ENCODE measurements at regions of chr9 and their contacts with region 1.

Region 1: DNA sequence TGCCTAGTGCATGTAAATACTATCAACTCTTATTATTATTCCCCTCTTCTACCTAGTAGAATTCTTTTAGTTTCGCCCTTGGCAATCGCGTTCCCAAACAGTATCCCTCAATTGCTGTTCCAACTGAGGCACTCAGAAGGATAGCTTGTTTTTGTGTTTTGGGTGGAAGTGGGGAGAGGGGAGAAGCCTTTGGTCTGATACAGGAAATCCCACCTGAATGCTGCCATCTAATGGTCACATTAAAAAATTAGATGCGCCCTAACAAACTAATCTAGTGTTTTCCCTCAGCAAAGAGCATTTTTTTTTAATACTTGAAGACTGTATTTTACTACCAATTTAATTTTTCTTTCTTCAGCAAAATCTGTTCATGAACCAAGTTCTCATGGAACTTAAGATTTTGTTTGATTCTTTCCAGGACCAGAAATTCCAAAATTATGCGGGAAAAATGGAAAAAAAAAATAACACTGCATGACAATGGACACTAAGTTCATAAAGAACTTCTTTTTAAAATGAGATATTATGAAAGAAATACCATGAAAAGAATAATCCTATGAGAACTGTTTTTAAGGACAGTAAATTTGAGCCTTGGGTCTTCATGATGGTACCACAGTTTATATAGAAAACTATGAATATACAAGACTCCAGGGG is 22.2 kb upstream of the GLDC start:
- DNase-seq: no peak
- H3K4me3 ChIP-seq: no peak overlapping the region
- CTCF ChIP-seq: peak; percentile 24

Region 2: DNA sequence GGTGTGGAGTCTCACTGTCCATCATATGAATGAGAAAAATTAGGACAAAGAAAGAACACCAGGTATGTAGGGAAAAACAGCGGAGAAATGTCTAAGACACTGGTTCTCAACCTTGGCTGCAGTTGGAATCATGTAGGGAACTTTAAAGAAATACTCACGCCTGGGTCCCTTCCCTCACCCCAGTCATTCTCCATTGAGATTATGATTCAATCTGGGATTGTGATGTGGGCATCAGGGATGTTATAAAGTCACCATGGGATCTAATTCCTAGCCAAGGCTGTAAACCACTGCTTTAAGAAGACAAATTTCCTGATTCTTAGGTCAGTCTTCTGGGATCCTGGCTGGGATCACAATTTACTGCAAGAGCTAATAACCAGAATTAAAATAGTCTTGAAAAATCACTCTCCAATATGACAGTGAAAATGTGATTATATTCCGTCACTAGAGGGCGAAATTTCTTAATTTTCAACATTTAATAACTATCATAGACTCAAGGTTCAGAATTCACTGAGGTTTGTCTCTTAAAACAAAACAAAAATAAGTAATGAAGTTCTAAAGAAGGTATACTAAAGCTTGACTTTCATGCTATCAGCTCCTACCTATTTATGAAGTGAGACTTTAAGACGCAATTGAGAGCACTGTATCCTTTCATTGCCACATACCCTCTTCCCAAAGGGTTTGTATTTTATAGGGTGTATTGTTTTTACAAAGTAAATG is 82.7 kb before region 1 on chr9:
- CTCF ChIA-PET with region 1: interaction called, 17 read pairs
- POLR2A ChIA-PET with region 1: no interaction called
- DNase-seq: no peak
- H3K4me3 ChIP-seq: no peak overlapping the region
- CTCF ChIP-seq: no peak

Region 3: DNA sequence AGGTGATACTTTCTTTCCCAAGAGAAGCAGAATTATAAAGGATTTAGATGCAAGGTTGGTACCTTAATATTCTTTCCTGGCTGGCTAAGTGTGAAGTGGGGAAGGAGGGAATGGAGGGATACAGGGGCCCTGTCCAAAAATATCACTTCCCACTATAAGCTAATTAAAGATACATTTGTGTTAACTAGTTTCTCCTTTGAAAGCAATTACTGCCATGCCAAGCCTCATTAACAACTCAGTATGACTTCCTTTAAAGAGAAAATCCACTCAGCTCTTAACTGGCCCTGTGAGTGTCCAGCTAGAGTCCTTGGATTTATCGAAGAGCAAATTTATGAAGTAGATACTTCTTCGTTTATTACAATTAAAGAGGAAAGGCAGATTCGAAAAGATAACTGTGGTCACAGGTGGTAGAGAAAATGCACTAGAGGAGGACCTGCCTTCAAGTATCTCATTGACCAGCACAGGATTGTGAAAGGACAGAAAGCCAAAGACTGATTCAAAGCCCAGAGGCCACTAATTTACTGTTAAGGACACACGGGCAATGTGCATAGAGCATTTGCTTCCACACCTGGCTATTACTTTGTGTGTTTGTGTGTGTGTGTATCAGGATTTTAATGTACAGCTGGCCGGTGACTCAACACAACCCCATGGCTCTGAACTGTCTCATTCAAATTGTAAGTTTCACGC is 11.0 kb before region 1 on chr9:
- CTCF ChIA-PET with region 1: interaction called, 10 read pairs
- POLR2A ChIA-PET with region 1: no interaction called
- DNase-seq: no peak
- H3K4me3 ChIP-seq: no peak overlapping the region
- CTCF ChIP-seq: no peak